ENCODE measurements at regions of chr1 and their contacts with region 1.

Region 1: GRCh38 chr1:43639976-43640789 is 9.8 kb upstream of the KDM4A start:
- DNase-seq: no peak
- ATAC-seq: peak; percentile 67
- H3K4me3 ChIP-seq: no peak overlapping the region
- H3K27ac ChIP-seq: no peak overlapping the region
- H3K4me1 ChIP-seq: peaks cover 22 to 57% of the 10 kb centered on the region in 2 experiments
- H3K27me3 ChIP-seq: no peaks in the 10 kb centered on the region
- CTCF ChIP-seq: peak in 1 of 3 experiments; percentile 21; a peak in 1 of 6 replicates
- POLR2A ChIP-seq: no peak
- RAD21 ChIP-seq: peak; percentile 55

Region 2: GRCh38 chr1:43554444-43554992 is 85.7 kb before region 1 on chr1:
- CTCF ChIA-PET with region 1: no interaction called
- POLR2A ChIA-PET with region 1: no interaction called
- RAD21 ChIA-PET with region 1: no interaction called
- intact Hi-C with region 1: loop called (anchors 5 kb)
- DNase-seq: peak; percentile 21
- ATAC-seq: 0 out of 2 replicates have a peak, but pooled peaks have one; percentile 25
- H3K4me3 ChIP-seq: no peak overlapping the region
- H3K27ac ChIP-seq: peak overlapping the region; percentile 13; the same call in 1 of the 2 replicates
- H3K4me1 ChIP-seq: peaks cover 20 to 31% of the 10 kb centered on the region in 2 experiments
- H3K27me3 ChIP-seq: no peaks in the 10 kb centered on the region
- CTCF ChIP-seq: peak in 2 of 3 experiments; percentile 55 to 65; a peak in 4 of 6 replicates
- POLR2A ChIP-seq: no peak
- RAD21 ChIP-seq: no peak; the same call in 1 of the 2 replicates

Region 3: GRCh38 chr1:43612406-43612805 is 27.8 kb before region 1 on chr1:
- CTCF ChIA-PET with region 1: no interaction called
- POLR2A ChIA-PET with region 1: no interaction called
- RAD21 ChIA-PET with region 1: no interaction called
- intact Hi-C with region 1: no loop called
- DNase-seq: no peak
- ATAC-seq: no peak
- H3K4me3 ChIP-seq: no peak overlapping the region
- H3K27ac ChIP-seq: no peak overlapping the region
- H3K4me1 ChIP-seq: no peaks in the 10 kb centered on the region
- H3K27me3 ChIP-seq: no peaks in the 10 kb centered on the region
- CTCF ChIP-seq: no peak
- POLR2A ChIP-seq: no peak
- RAD21 ChIP-seq: no peak

Region 4: GRCh38 chr1:43622471-43622870 is 17.7 kb before region 1 on chr1:
- CTCF ChIA-PET with region 1: no interaction called
- POLR2A ChIA-PET with region 1: no interaction called
- RAD21 ChIA-PET with region 1: no interaction called
- intact Hi-C with region 1: no loop called
- DNase-seq: no peak
- ATAC-seq: no peak
- H3K4me3 ChIP-seq: no peak overlapping the region
- H3K27ac ChIP-seq: no peak overlapping the region
- H3K4me1 ChIP-seq: no peaks in the 10 kb centered on the region
- H3K27me3 ChIP-seq: no peaks in the 10 kb centered on the region
- CTCF ChIP-seq: no peak
- POLR2A ChIP-seq: no peak
- RAD21 ChIP-seq: no peak